ENCODE measurements at regions of chr7 and their contacts with region 1.

Region 1: GRCh38 chr7:40673285-40673684 is 538.5 kb downstream of the SUGCT start:
- DNase-seq: peak; percentile 93
- ATAC-seq: peak; percentile 84
- H3K4me3 ChIP-seq: no peak overlapping the region
- H3K27ac ChIP-seq: no peak overlapping the region
- H3K4me1 ChIP-seq: no peaks in the 10 kb centered on the region
- H3K27me3 ChIP-seq: no peaks in the 10 kb centered on the region
- CTCF ChIP-seq: no peak
- POLR2A ChIP-seq: no peak
- RAD21 ChIP-seq: no peak

Region 2: GRCh38 chr7:40638545-40639320 is 34.6 kb before region 1 on chr7:
- CTCF ChIA-PET with region 1: no interaction called
- POLR2A ChIA-PET with region 1: no interaction called
- dilution Hi-C with region 1: no loop called
- in situ Hi-C with region 1: no loop called
- intact Hi-C with region 1: loop called (anchors 5 kb)
- DNase-seq: no peak
- ATAC-seq: no peak
- H3K4me3 ChIP-seq: no peak overlapping the region
- H3K27ac ChIP-seq: no peak overlapping the region
- H3K4me1 ChIP-seq: no peaks in the 10 kb centered on the region
- H3K27me3 ChIP-seq: peaks cover 2% of the 10 kb centered on the region
- CTCF ChIP-seq: no peak
- POLR2A ChIP-seq: no peak
- RAD21 ChIP-seq: no peak

Region 3: GRCh38 chr7:40827217-40828085 is 154.2 kb after region 1 on chr7:
- CTCF ChIA-PET with region 1: no interaction called
- POLR2A ChIA-PET with region 1: no interaction called
- dilution Hi-C with region 1: no loop called
- in situ Hi-C with region 1: no loop called
- intact Hi-C with region 1: no loop called
- DNase-seq: no peak
- ATAC-seq: peak; percentile 30
- H3K4me3 ChIP-seq: no peak overlapping the region
- H3K27ac ChIP-seq: peak overlapping the region; percentile 85
- H3K4me1 ChIP-seq: peaks cover 16% of the 10 kb centered on the region
- H3K27me3 ChIP-seq: no peaks in the 10 kb centered on the region
- CTCF ChIP-seq: no peak
- POLR2A ChIP-seq: no peak
- RAD21 ChIP-seq: no peak

Measured in IMR-90 (cell line).